ENCODE measurements at regions of chr14 and their contacts with region 1.

Region 1: GRCh38 chr14:38867561-38868150 is 235.4 kb downstream of the SEC23A start:
- DNase-seq: peak; percentile 60 to 75 (median 68)
- ATAC-seq: peak; percentile 84 to 92 (median 89)
- H3K4me3 ChIP-seq: no peak overlapping the region
- H3K27ac ChIP-seq: no peak overlapping the region
- H3K4me1 ChIP-seq: peaks cover 0 to 15% (median 7%) of the 10 kb centered on the region in 4 donors
- H3K27me3 ChIP-seq: no peaks in the 10 kb centered on the region
- CTCF ChIP-seq: peak; percentile 66 to 90 (median 86)
- POLR2A ChIP-seq: no peak

Region 2: GRCh38 chr14:39015360-39015961 is 147.8 kb after region 1 on chr14:
- intact Hi-C with region 1: loop called in 1 of 2 experiments (anchors 10 kb)
- DNase-seq: no peak
- ATAC-seq: peak; percentile 83 to 90 (median 88)
- H3K4me3 ChIP-seq: no peak overlapping the region
- H3K27ac ChIP-seq: no peak overlapping the region
- H3K4me1 ChIP-seq: peaks cover 0 to 18% (median 2%) of the 10 kb centered on the region in 4 donors
- H3K27me3 ChIP-seq: no peaks in the 10 kb centered on the region
- CTCF ChIP-seq: peak; percentile 65 to 86 (median 80)
- POLR2A ChIP-seq: no peak

Region 3: DNA sequence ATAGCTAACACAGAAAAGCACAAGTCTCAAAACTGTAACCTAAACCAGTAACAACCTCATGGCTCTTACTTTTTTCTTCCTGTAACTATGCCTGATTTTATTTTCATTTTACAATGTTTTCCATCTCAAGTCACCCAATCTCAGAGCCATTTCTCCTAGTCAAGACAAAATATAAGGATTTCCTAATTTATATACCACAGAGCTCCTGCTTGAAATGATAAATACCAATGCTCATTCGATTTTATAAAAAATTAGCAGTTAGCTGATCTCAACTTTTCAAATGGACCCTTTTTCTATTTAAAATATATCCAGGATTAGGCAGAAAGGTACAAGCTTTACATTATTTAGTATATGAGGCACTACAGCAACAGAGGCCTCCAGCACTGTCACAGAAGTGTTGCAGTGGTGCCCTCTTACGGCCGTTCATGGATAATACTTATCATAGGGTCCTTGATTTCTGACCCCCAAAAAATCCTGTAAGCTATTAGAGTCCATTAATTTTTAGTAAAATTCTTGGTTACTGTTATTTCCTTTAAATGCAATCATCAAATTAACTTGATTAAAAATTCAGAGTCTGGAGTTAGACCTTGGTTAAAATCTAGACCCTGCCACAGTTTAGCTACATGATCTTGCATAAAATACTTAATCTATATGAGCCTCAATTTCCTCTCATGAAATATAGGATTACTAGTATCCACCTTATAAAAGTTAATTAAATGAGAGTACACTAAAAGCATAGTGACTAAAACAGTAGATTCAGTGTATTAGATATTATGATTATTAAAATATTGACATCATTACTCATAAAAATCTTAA is 167.0 kb after region 1 on chr14:
- intact Hi-C with region 1: no loop called
- DNase-seq: no peak
- ATAC-seq: peak; percentile 57 to 68 (median 64)
- H3K4me3 ChIP-seq: no peak overlapping the region
- H3K27ac ChIP-seq: no peak overlapping the region
- H3K4me1 ChIP-seq: no peaks in the 10 kb centered on the region
- H3K27me3 ChIP-seq: no peaks in the 10 kb centered on the region
- CTCF ChIP-seq: peak; percentile 22 to 45 (median 30)
- POLR2A ChIP-seq: no peak

Measured in right lobe of liver (tissue), 6 donors.